Activated CD4-positive, alpha-beta T cell treated with anti-CD3 and anti-CD28 coated beads for 36 hours (primary cell): ENCODE measurements at regions of chr7 and their contacts with region 1.

Region 1: GRCh38 chr7:151936207-151936606 is 20.0 kb upstream of the GALNTL5 start:
- DNase-seq: no peak
- ATAC-seq: peak; percentile 88
- H3K4me3 Mint-ChIP-seq: peak overlapping the region; percentile 43
- H3K27ac Mint-ChIP-seq: peak overlapping the region; percentile 84
- H3K4me1 Mint-ChIP-seq: peaks cover 23% of the 10 kb centered on the region
- H3K27me3 Mint-ChIP-seq: no peaks in the 10 kb centered on the region

Region 2: DNA sequence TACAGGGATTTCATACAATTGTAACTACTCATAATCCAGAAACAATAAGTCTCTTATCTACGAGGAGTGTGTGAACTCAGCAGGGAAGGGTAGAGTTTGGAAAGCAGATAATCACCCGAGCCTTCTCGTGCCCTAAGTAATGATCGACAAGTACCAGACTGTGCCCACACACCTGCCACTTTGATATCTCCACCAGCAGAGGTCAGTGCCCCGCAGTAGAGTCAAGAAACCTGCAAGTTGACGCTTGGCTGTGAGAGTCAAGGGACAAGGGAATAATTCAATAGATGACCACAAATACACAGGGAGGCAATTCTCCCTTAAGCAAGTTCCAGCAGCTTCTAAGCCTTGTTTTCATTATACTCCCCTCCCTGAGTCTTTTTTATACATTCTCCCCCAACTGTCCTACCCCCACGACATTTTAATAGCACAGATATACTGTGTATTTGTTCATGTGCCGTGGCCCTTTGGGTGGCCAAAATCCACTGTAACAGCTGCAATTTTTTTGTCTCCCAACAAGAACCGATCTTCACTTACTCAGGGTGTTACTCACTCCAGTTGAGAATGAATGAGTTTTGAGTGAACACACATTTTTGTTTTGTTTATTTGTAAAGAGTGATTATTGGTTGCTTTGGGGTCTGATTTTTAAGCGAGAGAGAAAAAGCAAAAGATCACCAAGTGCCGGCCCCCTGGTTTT is 309.6 kb before region 1 on chr7:
- CTCF ChIA-PET with region 1: no interaction called
- POLR2A ChIA-PET with region 1: no interaction called
- intact Hi-C with region 1: loop called in 1 of 2 experiments (anchors 2 kb)
- DNase-seq: peak; percentile 63
- ATAC-seq: peak; percentile 51
- H3K4me3 Mint-ChIP-seq: no peak overlapping the region
- H3K27ac Mint-ChIP-seq: no peak overlapping the region
- H3K4me1 Mint-ChIP-seq: peaks cover 28% of the 10 kb centered on the region
- H3K27me3 Mint-ChIP-seq: no peaks in the 10 kb centered on the region

Region 3: DNA sequence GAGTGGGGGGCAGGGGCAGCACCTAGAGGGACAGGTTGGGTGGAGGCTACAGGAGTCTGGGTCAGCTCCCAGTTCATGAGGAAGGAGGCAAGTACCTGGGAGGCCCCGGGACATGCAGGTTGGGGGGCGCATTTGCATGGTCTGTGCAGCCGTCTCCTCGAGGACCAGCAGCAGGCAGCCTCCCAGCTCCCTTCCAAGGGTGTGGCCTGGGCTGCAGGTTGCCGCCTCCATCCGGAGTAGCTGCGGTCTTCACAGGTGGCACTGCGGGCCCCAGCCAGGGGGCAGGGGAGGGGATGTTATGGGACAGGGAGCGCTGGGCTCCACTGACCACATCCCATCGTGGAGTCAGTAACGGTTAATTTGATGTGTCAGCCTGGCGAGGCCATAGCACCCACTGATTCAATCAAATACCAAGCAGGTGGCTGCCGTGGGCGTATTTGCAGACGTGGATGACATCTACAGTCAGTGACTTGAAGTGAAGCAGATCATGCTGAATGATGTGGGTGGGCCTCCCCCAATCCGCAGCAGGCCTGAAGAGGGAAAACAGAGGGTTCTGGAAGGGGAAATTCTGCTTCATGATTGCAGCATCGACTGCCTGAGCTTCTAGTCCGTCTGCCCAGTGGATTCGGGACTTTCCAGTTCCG is 140.9 kb before region 1 on chr7:
- CTCF ChIA-PET with region 1: no interaction called
- POLR2A ChIA-PET with region 1: no interaction called
- intact Hi-C with region 1: loop called in 1 of 2 experiments (anchors 1 kb)
- DNase-seq: peak; percentile 94
- ATAC-seq: peak; percentile 93
- H3K4me3 Mint-ChIP-seq: no peak overlapping the region
- H3K27ac Mint-ChIP-seq: peak overlapping the region; percentile 67
- H3K4me1 Mint-ChIP-seq: peaks cover 33% of the 10 kb centered on the region
- H3K27me3 Mint-ChIP-seq: no peaks in the 10 kb centered on the region

Region 4: GRCh38 chr7:151954866-151955820 is 18.9 kb after region 1 on chr7:
- CTCF ChIA-PET with region 1: no interaction called
- POLR2A ChIA-PET with region 1: no interaction called
- intact Hi-C with region 1: no loop called
- DNase-seq: no peak
- ATAC-seq: no peak
- H3K4me3 Mint-ChIP-seq: no peak overlapping the region
- H3K27ac Mint-ChIP-seq: no peak overlapping the region
- H3K4me1 Mint-ChIP-seq: no peaks in the 10 kb centered on the region
- H3K27me3 Mint-ChIP-seq: no peaks in the 10 kb centered on the region

Region 5: GRCh38 chr7:152145853-152146466 is 209.8 kb after region 1 on chr7:
- CTCF ChIA-PET with region 1: no interaction called
- POLR2A ChIA-PET with region 1: no interaction called
- intact Hi-C with region 1: loop called in 1 of 2 experiments (anchors 1 kb)
- DNase-seq: peak; percentile 52
- ATAC-seq: peak; percentile 43
- H3K4me3 Mint-ChIP-seq: no peak overlapping the region
- H3K27ac Mint-ChIP-seq: peak overlapping the region; percentile 93
- H3K4me1 Mint-ChIP-seq: peaks cover 48% of the 10 kb centered on the region
- H3K27me3 Mint-ChIP-seq: no peaks in the 10 kb centered on the region